Ascending aorta (tissue), 2 donors: ENCODE measurements at regions of chr10 and their contacts with region 1.

Region 1: GRCh38 chr10:15719899-15720634 is at the start of gene ITGA8:
- DNase-seq: peak in 1 of 2 donors; percentile 84
- H3K4me3 ChIP-seq: peak within 1 kb of the TSS; percentile 78 to 96
- H3K27ac ChIP-seq: peak within 1 kb of the TSS; percentile 91 to 95
- H3K4me1 ChIP-seq: peaks cover 7 to 28% of the 10 kb centered on the region in 2 donors
- H3K27me3 ChIP-seq: no peaks in the 10 kb centered on the region
- CTCF ChIP-seq: peak; percentile 60 to 68 (median 62)
- total RNA-seq, gene ITGA8: 231 TPM

Region 2: GRCh38 chr10:15433850-15434537 is 286.1 kb before region 1 on chr10:
- intact Hi-C with region 1: loop called (anchors 1 kb)
- DNase-seq: no peak
- H3K4me3 ChIP-seq: peak overlapping the region in 1 of 2 donors; percentile 57
- H3K27ac ChIP-seq: peak overlapping the region; percentile 63 to 69
- H3K4me1 ChIP-seq: peaks cover 4 to 14% of the 10 kb centered on the region in 2 donors
- H3K27me3 ChIP-seq: no peaks in the 10 kb centered on the region
- CTCF ChIP-seq: peak; percentile 38 to 73 (median 69)

Region 3: DNA sequence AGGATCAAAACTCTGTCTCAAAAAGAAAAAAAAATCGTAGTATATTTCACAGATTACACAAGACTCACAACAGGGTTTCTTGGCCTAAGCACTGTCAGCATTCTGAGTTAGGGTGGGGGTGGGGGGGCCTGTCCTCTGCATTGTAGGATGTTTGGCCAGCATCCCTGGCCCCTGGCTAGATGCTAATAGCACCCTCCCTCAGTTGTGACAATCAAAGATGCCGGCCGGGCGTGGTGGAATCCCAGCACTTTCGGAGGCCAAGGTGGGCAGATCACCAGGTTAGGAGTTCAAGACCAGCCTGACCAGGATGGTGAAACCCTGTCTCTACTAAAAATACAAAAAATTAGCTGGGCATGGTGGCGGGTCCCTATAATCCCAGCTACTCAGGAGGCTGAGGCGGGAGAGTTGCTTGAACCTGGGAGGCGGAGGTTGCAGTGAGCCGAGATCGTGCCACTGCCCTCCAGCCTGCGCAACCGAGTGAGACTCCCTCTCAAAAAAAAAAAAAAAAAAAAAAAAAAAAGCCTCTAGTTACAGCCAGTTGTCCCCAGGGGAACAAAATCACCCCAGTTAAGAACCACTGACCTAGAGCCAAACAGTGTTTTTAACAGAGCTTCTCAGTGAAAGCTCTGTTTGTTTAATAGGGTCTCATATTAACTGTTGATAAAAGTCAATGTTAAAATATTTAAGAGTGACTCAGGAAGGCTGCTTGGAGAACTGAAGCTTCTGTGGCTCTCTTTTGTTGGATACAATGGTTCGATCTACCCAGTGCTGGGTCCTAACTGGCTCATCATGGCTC is 187.9 kb before region 1 on chr10:
- intact Hi-C with region 1: loop called (anchors 5 kb)
- DNase-seq: no peak
- H3K4me3 ChIP-seq: no peak overlapping the region
- H3K27ac ChIP-seq: peak overlapping the region; percentile 82 to 86
- H3K4me1 ChIP-seq: peaks cover 3 to 28% of the 10 kb centered on the region in 2 donors
- H3K27me3 ChIP-seq: no peaks in the 10 kb centered on the region
- CTCF ChIP-seq: no peak

Region 4: DNA sequence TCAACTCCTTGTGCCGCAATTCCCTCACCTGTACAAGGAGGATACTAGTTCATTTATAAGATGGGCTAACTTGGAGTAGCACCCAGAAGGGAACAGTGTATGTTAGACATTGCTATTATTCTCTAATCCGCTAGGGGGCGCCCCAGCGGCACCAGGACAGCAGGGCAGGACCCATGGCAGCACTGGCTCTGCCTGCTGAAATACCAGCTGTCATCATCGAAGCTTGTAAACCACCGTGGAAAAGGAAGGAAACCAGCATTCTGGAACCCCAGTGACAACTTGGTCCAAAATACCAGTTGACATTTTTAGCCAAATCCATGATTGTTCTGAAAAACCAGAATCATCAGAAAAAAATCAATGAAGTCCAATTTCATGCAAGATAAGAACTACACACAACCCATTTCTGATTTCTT is 134.8 kb before region 1 on chr10:
- intact Hi-C with region 1: loop called (anchors 5 kb)
- DNase-seq: peak in 1 of 2 donors; percentile 84
- H3K4me3 ChIP-seq: no peak overlapping the region
- H3K27ac ChIP-seq: peak overlapping the region in 1 of 2 donors; percentile 31
- H3K4me1 ChIP-seq: peaks cover 0 to 3% of the 10 kb centered on the region in 2 donors
- H3K27me3 ChIP-seq: no peaks in the 10 kb centered on the region
- CTCF ChIP-seq: peak; percentile 72 to 81 (median 80)

Region 5: GRCh38 chr10:15627617-15628196 is 92.4 kb before region 1 on chr10:
- intact Hi-C with region 1: no loop called
- DNase-seq: no peak
- H3K4me3 ChIP-seq: no peak overlapping the region
- H3K27ac ChIP-seq: peak overlapping the region; percentile 76 to 77
- H3K4me1 ChIP-seq: peaks cover 3 to 46% of the 10 kb centered on the region in 2 donors
- H3K27me3 ChIP-seq: no peaks in the 10 kb centered on the region
- CTCF ChIP-seq: no peak

Region 6: GRCh38 chr10:15642095-15642494 is 78.0 kb before region 1 on chr10:
- intact Hi-C with region 1: no loop called
- DNase-seq: peak in 1 of 2 donors; percentile 73
- H3K4me3 ChIP-seq: no peak overlapping the region
- H3K27ac ChIP-seq: peak overlapping the region; percentile 16 to 59
- H3K4me1 ChIP-seq: peaks cover 0 to 21% of the 10 kb centered on the region in 2 donors
- H3K27me3 ChIP-seq: no peaks in the 10 kb centered on the region
- CTCF ChIP-seq: no peak

Region 7: DNA sequence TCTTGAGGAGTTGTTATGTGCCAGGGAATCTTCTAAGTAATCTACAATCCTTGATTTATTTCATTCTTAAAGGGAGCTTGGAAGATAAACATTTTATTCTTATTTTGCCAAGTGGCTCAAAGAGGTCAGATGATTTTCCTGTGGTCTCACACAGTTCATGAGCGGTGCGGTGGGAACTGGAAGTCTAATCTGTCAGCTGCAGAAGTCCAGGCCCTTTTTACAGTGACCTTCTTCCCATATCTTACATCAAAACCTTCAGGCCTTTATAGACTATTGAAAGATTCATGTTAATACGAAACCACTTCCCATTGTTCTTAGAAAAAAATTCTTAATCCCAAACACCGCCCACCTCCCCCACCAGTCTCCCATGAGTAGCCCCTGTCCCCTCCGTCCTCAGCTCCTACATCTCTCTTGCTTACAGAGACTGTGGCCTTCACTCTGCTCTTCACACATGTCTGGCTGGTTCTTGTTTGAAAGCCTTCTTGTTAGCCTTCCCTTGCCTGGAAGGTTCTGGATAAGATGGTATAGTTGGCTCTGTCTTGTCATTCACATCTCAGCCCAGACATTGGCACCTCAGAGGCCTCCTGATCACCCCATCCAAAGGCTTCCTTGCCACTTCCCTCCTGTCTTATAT is 61.9 kb before region 1 on chr10:
- intact Hi-C with region 1: loop called (anchors 10 kb)
- DNase-seq: no peak
- H3K4me3 ChIP-seq: no peak overlapping the region
- H3K27ac ChIP-seq: peak overlapping the region in 1 of 2 donors; percentile 34
- H3K4me1 ChIP-seq: peaks cover 0 to 6% of the 10 kb centered on the region in 2 donors
- H3K27me3 ChIP-seq: no peaks in the 10 kb centered on the region
- CTCF ChIP-seq: no peak